H1 (cell line): ENCODE measurements at regions of chr17 and their contacts with region 1.

Region 1: DNA sequence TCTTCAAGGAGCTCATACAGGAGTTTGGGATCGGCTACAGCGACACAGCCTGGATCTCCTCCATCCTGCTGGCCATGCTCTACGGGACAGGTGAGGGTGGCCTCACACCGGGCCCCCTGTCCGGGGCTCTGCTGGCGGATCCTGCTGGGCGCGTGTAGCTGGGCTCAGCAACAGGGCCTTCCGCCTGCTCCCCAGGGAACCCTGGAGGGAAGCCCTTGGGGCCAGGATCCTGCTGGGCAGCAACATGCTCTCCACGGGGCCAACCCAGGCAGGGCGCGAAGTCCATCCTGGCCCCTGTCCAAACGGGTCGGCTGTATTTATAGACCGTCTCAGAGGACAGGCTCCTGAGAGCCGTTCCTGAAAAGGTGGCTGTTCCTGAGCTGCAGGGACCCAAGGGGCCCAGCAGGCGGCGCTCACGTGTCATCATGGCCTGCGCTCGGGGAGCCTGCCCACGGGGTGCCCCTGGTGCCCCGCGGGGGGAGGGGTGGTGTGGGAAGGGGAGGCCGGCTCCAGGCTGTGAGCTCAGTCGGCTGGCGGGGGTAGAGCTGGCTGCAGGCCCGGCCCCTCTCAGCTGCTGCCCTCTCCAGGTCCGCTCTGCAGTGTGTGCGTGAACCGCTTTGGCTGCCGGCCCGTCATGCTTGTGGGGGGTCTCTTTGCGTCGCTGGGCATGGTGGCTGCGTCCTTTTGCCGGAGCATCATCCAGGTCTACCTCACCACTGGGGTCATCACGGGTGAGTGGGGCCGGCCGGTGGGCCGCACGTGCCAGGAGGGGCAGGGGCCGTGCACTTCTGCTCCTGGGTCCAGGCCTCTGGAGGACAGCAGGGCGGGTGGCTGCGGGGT is 7.5 kb downstream of the SLC16A3 start:
- DNase-seq: peak in 1 of 2 experiments; percentile 91
- H3K4me3 ChIP-seq: no peak overlapping the region
- H3K27ac ChIP-seq: no peak overlapping the region
- H3K4me1 ChIP-seq: peaks cover 0 to 10% (median 5%) of the 10 kb centered on the region in 4 experiments; a peak in 5 of 7 replicates
- H3K27me3 ChIP-seq: peaks cover 0 to 16% (median 10%) of the 10 kb centered on the region in 4 experiments; a peak in 4 of 7 replicates
- CTCF ChIP-seq: peak; percentile 76 to 85 (median 80)
- EP300 ChIP-seq: no peak
- POLR2A ChIP-seq: peak in 1 of 2 experiments; percentile 43; a peak in 1 of 3 replicates
- RAD21 ChIP-seq: peak; percentile 73 to 86

Region 2: GRCh38 chr17:82051776-82052637 is 184.4 kb before region 1 on chr17 and contains the starts of genes GPS1 and RFNG:
- CTCF ChIA-PET with region 1: no interaction called
- POLR2A ChIA-PET with region 1: no interaction called
- DNase-seq: peak in 1 of 2 experiments; percentile 86
- H3K4me3 ChIP-seq: peak within 1 kb of the TSS; percentile 72 to 94 (median 86)
- H3K27ac ChIP-seq: no peak within 1 kb of the TSS
- H3K4me1 ChIP-seq: peaks cover 0 to 11% (median 6%) of the 10 kb centered on the region in 4 experiments; a peak in 5 of 7 replicates
- H3K27me3 ChIP-seq: no peaks in the 10 kb centered on the region; a peak in 1 of 7 replicates
- CTCF ChIP-seq: no peak
- EP300 ChIP-seq: no peak
- POLR2A ChIP-seq: no peak; a peak in 1 of 3 replicates
- RAD21 ChIP-seq: no peak
- total RNA-seq, gene GPS1: 153 and 157 TPM in 2 replicates
- total RNA-seq, gene RFNG: 26.7 and 30.9 TPM in 2 replicates

Region 3: GRCh38 chr17:82246365-82247174 is 10.2 kb after region 1 on chr17:
- CTCF ChIA-PET with region 1: interaction called, 10 read pairs
- POLR2A ChIA-PET with region 1: interaction called, 8 read pairs
- DNase-seq: no peak
- H3K4me3 ChIP-seq: no peak overlapping the region
- H3K27ac ChIP-seq: no peak overlapping the region
- H3K4me1 ChIP-seq: no peaks in the 10 kb centered on the region; a peak in 1 of 7 replicates
- H3K27me3 ChIP-seq: no peaks in the 10 kb centered on the region
- CTCF ChIP-seq: no peak
- EP300 ChIP-seq: no peak
- POLR2A ChIP-seq: no peak
- RAD21 ChIP-seq: no peak

Region 4: GRCh38 chr17:82255486-82255885 is 19.1 kb after region 1 on chr17:
- CTCF ChIA-PET with region 1: interaction called, 7 read pairs
- POLR2A ChIA-PET with region 1: interaction called, 10 read pairs
- DNase-seq: no peak
- H3K4me3 ChIP-seq: no peak overlapping the region
- H3K27ac ChIP-seq: no peak overlapping the region
- H3K4me1 ChIP-seq: no peaks in the 10 kb centered on the region
- H3K27me3 ChIP-seq: no peaks in the 10 kb centered on the region
- CTCF ChIP-seq: no peak
- EP300 ChIP-seq: no peak
- POLR2A ChIP-seq: no peak
- RAD21 ChIP-seq: no peak

Region 5: GRCh38 chr17:82273327-82274133 is 37.2 kb after region 1 on chr17 and contains the start of gene CSNK1D:
- CTCF ChIA-PET with region 1: interaction called, 5 read pairs
- POLR2A ChIA-PET with region 1: interaction called, 10 read pairs
- DNase-seq: peak in 1 of 2 experiments; percentile 97
- H3K4me3 ChIP-seq: peak within 1 kb of the TSS; percentile 84 to 95 (median 89)
- H3K27ac ChIP-seq: peak within 1 kb of the TSS; percentile 95; the same call in 1 of the 2 replicates
- H3K4me1 ChIP-seq: peaks cover 0 to 30% (median 7%) of the 10 kb centered on the region in 4 experiments; a peak in 6 of 7 replicates
- H3K27me3 ChIP-seq: peaks cover 0 to 5% (median 5%) of the 10 kb centered on the region in 4 experiments; a peak in 3 of 7 replicates
- CTCF ChIP-seq: no peak
- EP300 ChIP-seq: 0 out of 3 replicates have a peak, but pooled peaks of 1 of the 2 experiments have one; percentile 30
- POLR2A ChIP-seq: peak in 1 of 2 experiments; percentile 70; a peak in 1 of 3 replicates
- RAD21 ChIP-seq: no peak
- total RNA-seq, gene CSNK1D: 103 and 107 TPM in 2 replicates

Region 6: GRCh38 chr17:82396601-82397470 is 160.5 kb after region 1 on chr17:
- CTCF ChIA-PET with region 1: no interaction called
- POLR2A ChIA-PET with region 1: no interaction called
- DNase-seq: no peak
- H3K4me3 ChIP-seq: no peak overlapping the region
- H3K27ac ChIP-seq: no peak overlapping the region
- H3K4me1 ChIP-seq: no peaks in the 10 kb centered on the region
- H3K27me3 ChIP-seq: no peaks in the 10 kb centered on the region
- CTCF ChIP-seq: no peak
- EP300 ChIP-seq: no peak
- POLR2A ChIP-seq: no peak
- RAD21 ChIP-seq: no peak